A673 (cell line): ENCODE measurements at regions of chr1 and their contacts with region 1.

Region 1: DNA sequence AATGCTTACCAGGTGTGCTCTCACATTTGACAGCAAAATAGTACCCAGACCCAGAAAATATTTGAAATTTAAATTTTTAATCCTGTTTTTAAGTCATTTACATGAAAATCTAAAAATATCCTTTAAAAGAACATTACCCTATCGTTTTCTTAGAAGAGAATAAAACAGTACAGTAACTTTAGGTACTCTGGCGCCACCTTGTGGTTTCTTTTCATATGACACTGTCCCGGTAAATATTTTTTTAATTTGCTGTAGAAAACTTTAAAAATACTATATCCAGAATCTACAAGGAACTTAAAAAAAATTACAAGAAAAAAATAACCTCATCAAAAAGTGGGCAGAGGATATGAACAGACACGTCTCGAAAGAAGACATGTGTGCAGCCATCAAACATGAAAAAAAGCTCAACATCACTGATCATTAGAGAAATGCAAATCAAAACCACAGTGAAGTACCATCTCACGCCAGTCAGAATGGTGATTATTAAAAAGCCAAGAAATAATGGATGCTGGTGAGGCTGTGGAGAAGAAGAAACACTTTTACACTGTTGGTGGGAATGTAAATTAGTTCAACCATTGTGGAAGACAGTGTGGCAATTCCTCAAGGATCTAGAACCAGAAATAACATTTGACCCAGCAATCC is 129.2 kb downstream of the RGS21 start:
- DNase-seq: peak; percentile 77
- H3K4me3 ChIP-seq: no peak overlapping the region
- H3K27ac ChIP-seq: peak overlapping the region; percentile 70
- H3K4me1 ChIP-seq: peaks cover 41% of the 10 kb centered on the region
- H3K27me3 ChIP-seq: no peaks in the 10 kb centered on the region
- CTCF ChIP-seq: peak; percentile 84

Region 2: DNA sequence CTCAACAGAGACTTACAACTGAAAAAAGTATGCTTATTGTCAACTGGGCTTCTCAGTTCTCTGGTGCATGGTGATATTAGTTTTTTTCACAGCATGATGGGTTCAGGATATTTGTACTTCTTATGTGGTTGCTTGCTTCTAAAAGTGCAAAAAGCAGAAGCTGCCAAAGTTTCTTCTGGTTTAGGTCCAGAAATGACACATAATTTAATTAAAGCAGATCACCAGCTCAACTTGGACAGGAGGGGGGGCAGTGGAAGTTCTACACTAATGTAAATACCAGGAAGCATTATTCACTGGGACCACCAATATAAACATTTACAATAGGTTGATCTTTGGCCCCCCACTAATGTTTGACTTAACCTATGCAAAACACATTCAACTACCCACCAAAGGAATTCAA is 1613.5 kb before region 1 on chr1:
- CTCF ChIA-PET with region 1: no interaction called
- POLR2A ChIA-PET with region 1: no interaction called
- intact Hi-C with region 1: loop called (anchors 10 kb)
- DNase-seq: no peak
- H3K4me3 ChIP-seq: no peak overlapping the region
- H3K27ac ChIP-seq: no peak overlapping the region
- H3K4me1 ChIP-seq: no peaks in the 10 kb centered on the region
- H3K27me3 ChIP-seq: no peaks in the 10 kb centered on the region
- CTCF ChIP-seq: no peak

Region 3: DNA sequence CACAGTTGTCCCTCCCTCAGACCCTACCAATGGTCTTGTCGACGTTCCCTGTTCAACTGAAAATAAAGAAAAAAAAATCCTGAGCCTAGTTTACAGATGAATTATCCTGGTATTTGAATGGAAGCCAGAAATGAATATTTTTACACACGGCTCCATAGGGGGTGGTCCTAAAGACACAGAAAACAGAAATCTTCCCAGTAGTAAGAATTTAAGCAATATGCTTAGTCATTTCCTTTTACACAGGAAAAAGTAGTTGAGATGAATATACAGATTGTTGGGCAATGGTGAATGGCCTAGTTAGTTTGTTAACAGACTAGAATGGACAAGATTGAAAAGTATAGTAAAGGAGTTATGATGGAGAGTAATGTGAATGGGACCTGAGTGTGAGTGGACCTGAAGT is 220.3 kb before region 1 on chr1:
- CTCF ChIA-PET with region 1: no interaction called
- POLR2A ChIA-PET with region 1: no interaction called
- intact Hi-C with region 1: loop called (anchors 5 kb)
- DNase-seq: peak; percentile 96
- H3K4me3 ChIP-seq: no peak overlapping the region
- H3K27ac ChIP-seq: peak overlapping the region; percentile 85
- H3K4me1 ChIP-seq: peaks cover 35% of the 10 kb centered on the region
- H3K27me3 ChIP-seq: no peaks in the 10 kb centered on the region
- CTCF ChIP-seq: no peak

Region 4: GRCh38 chr1:192316942-192317450 is 129.0 kb before region 1 on chr1 and contains the start of gene RGS21:
- CTCF ChIA-PET with region 1: no interaction called
- POLR2A ChIA-PET with region 1: no interaction called
- intact Hi-C with region 1: loop called (anchors 2 kb)
- DNase-seq: peak; percentile 72
- H3K4me3 ChIP-seq: no peak within 1 kb of the TSS
- H3K27ac ChIP-seq: peak within 1 kb of the TSS; percentile 51
- H3K4me1 ChIP-seq: peaks cover 63% of the 10 kb centered on the region
- H3K27me3 ChIP-seq: no peaks in the 10 kb centered on the region
- CTCF ChIP-seq: no peak
- total RNA-seq, gene RGS21: 0.17 and 0.43 TPM in 2 replicates

Region 5: DNA sequence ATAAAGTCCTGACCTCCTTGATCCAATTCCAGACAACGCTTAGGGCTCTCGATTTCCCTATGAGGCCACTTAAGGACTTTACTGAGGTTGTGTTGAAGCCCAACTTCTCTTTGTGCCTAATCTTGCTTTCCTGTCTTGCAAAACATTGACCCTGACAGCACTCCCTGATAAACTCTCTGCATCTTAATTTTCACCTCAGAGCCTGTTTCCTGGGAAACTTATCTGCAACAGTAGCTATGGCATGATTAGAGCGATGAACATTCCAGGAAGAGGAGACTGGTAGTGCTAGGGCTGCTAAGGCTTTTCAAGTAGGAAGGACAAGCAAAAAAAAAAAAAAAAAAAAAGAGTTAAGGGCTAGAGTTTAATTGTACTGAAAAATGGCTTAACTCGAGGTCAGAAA is 10.3 kb before region 1 on chr1:
- CTCF ChIA-PET with region 1: interaction called, 14 read pairs
- POLR2A ChIA-PET with region 1: no interaction called
- intact Hi-C with region 1: no loop called
- DNase-seq: no peak
- H3K4me3 ChIP-seq: no peak overlapping the region
- H3K27ac ChIP-seq: no peak overlapping the region
- H3K4me1 ChIP-seq: peaks cover 4% of the 10 kb centered on the region
- H3K27me3 ChIP-seq: no peaks in the 10 kb centered on the region
- CTCF ChIP-seq: no peak